ENCODE measurements at regions of chr19 and their contacts with region 1.

Region 1: DNA sequence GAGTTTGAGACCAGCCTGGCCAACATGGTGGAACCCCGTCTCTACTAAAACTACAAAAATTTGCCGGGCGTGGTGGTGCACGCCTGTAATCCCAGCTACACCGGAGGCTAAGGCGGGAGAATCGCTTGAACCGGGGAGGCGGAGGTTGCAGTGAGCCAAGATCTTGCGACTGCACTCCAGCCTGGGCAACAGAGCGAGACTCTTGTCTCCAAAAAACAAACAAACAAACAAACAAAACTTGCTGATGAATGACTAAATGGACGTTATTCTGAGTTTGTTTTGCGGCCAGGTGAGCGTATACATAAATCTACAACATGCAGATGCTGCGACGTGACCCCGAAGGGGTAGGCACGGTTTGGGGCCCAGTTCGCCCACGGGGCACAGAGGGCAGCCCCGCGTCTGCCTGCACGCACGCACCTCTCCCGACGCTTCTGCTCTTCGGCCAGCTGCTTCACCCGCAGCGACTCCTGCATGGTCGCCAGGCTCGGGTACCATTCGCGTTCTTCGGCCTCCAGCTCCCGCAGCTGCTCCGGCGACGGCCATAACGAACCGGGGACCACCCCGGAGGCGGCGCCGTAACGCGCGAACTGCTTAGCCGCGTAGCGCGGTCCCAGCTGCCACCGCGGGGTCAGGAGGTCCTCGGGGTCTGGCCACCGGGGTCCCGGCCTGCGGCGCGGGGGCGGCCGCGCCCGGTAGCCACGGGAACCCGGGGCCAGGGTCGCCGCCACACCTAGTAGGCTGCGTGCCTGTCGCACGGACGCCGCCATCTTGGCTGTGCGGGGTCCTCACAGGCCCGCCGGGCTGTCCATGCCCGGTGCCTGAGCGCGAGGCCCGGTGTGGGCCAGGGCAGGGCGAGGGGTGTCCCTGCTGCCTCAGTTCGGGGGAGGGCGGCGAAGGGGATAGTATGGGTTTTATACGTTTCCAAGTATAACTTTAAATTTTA is at the start of gene GADD45GIP1:
- DNase-seq: peak; percentile 36 to 88 (median 78)

Region 2: DNA sequence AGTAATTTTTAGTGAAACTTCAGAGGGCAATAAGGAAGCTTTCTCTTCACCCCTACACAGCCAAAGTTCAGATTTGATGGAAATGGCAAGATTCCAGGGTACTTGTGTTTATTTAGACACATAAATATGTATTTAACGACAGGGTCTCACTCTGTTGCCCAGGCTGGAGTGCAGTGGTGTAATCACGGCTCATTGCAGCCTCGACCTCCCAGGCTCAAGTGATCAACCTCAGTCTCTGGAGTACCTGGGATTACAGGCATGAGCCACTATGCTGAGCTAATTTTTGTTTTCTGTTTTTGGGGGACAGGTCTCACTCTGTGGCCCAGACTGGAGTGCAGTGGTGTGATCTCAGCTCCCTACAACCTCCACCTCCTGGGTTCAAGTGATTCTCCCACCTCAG is 35.7 kb before region 1 on chr19:
- intact Hi-C with region 1: loop called (anchors 2 kb)
- DNase-seq: no peak